Left colon (tissue), 2 donors: ENCODE measurements at regions of chr10 and their contacts with region 1.

Region 1: GRCh38 chr10:110354322-110354766 is 49.6 kb upstream of the SMNDC1 start:
- DNase-seq: peak; percentile 71 to 95
- ATAC-seq: peak; percentile 88

Region 2: DNA sequence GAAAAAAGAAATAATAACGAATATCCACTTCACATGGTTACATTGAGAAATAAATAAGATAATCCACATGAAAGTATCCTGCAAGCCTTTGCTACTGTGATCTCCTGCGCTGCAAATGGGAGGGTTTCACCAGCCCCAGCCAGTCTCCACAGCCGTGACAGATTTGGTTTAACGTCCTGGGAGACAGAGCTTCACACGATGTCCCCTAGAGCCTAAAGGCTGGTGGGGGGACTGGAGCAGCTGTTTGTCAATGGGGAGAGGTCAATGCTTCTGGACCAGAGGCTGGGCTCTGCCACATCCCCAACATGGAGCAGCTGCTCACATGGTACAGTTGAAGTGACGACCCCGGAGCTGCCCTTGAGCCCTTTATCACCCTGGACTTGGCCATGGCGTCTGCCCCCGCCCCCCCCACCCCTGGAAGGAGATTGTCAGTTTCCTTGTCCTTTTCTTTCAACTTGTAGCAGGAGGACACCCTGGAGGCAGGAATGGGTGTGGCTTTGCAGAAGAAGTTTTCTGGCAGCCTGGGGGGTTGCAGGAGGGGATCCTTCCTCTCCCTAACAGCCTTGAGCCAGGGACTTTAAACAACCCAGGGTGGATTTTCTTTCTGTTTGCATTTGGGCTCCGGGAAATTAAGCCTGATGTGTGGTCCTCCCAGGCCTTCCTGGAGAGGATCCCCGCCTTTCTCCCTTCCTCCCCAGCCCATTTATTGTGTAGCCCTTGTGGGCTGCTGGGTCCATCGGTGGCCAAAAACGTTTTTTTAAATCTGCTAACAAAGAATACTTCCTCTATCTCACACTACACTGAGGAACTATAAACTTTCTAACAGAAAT is 184.0 kb before region 1 on chr10:
- intact Hi-C with region 1: no loop called
- DNase-seq: peak in 1 of 2 donors; percentile 22
- ATAC-seq: no peak

Region 3: GRCh38 chr10:110547139-110547761 is 192.9 kb after region 1 on chr10:
- intact Hi-C with region 1: loop called in 1 of 2 experiments (anchors 10 kb)
- DNase-seq: no peak
- ATAC-seq: peak; percentile 61